Caco-2 (cell line): ENCODE measurements at regions of chr10 and their contacts with region 1.

Region 1: GRCh38 chr10:21242915-21243314 is 282.6 kb downstream of the SKIDA1 start:
- DNase-seq: peak; percentile 62 to 71
- H3K4me3 ChIP-seq: no peak overlapping the region
- H3K4me3 Mint-ChIP-seq: peak overlapping the region; percentile 61
- H3K27ac Mint-ChIP-seq: peak overlapping the region; percentile 84
- H3K4me1 ChIP-seq: peaks cover 19% of the 10 kb centered on the region
- H3K4me1 Mint-ChIP-seq: peaks cover 26% of the 10 kb centered on the region
- H3K27me3 ChIP-seq: no peaks in the 10 kb centered on the region
- H3K27me3 Mint-ChIP-seq: no peaks in the 10 kb centered on the region
- CTCF ChIP-seq: no peak

Region 2: GRCh38 chr10:21265621-21266020 is 22.7 kb after region 1 on chr10:
- CTCF ChIA-PET with region 1: interaction called, 4 read pairs
- POLR2A ChIA-PET with region 1: no interaction called
- intact Hi-C with region 1: loop called (anchors 1 kb)
- DNase-seq: no peak
- H3K4me3 ChIP-seq: no peak overlapping the region
- H3K4me3 Mint-ChIP-seq: no peak overlapping the region
- H3K27ac Mint-ChIP-seq: no peak overlapping the region
- H3K4me1 ChIP-seq: peaks cover 21% of the 10 kb centered on the region
- H3K4me1 Mint-ChIP-seq: no peaks in the 10 kb centered on the region
- H3K27me3 ChIP-seq: no peaks in the 10 kb centered on the region
- H3K27me3 Mint-ChIP-seq: no peaks in the 10 kb centered on the region
- CTCF ChIP-seq: no peak

Region 3: GRCh38 chr10:21675157-21675796 is 432.4 kb after region 1 on chr10:
- CTCF ChIA-PET with region 1: no interaction called
- POLR2A ChIA-PET with region 1: no interaction called
- intact Hi-C with region 1: no loop called
- DNase-seq: peak; percentile 58 to 70
- H3K4me3 ChIP-seq: no peak overlapping the region
- H3K4me3 Mint-ChIP-seq: no peak overlapping the region
- H3K27ac Mint-ChIP-seq: no peak overlapping the region
- H3K4me1 ChIP-seq: no peaks in the 10 kb centered on the region
- H3K4me1 Mint-ChIP-seq: peaks cover 5% of the 10 kb centered on the region
- H3K27me3 ChIP-seq: no peaks in the 10 kb centered on the region
- H3K27me3 Mint-ChIP-seq: no peaks in the 10 kb centered on the region
- CTCF ChIP-seq: peak; percentile 84 to 89